ENCODE measurements at regions of chr14 and their contacts with region 1.

Region 1: DNA sequence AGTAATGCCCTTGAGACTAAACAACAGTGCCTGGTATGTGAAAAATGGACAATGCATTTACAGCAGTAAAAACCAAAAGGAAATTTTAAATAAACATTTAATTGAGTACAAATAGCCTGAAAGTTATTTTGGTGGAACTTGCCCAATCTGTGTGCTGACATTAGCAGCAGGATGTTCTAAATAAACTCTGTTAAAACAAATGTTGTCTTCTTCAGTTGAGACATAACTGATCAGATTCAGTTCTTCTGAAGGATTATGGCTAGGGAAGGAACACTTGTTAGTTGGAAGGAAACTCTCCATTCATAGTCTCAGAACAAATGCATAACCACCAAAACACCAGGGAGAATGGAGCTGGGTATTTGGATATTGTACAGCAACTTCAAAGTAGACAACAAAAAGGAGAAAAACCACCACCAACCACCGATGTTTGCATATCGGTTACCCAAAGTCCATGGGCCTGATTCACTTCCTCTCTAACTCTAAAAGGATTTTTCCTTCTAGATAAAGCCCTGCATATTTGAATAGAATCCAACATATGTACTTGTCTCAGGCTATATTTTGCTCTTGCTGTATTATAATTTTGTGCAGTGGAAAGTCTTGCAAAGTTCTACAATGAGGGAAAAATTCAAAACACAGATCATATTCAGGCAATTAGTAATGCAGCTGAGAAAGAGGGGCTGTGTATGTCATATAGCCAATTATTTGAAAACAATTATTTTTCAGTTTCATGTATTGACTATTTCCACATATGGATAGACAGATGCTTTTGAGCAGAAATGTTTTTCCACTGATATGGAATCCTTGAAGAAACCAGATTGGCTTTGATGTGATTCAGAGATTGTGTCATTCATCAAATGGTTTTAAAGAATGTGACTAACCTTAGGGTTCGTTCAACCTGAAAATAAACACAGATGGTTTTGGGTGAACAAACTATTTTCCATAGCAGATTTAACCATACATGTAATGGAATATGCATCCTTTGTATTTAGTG is 152.2 kb upstream of the BMP4 start:
- DNase-seq: peak; percentile 39
- H3K4me3 Mint-ChIP-seq: no peak overlapping the region
- H3K27ac Mint-ChIP-seq: peak overlapping the region; percentile 61
- H3K4me1 Mint-ChIP-seq: peaks cover 41% of the 10 kb centered on the region
- H3K27me3 Mint-ChIP-seq: no peaks in the 10 kb centered on the region
- CTCF ChIP-seq: no peak

Region 2: DNA sequence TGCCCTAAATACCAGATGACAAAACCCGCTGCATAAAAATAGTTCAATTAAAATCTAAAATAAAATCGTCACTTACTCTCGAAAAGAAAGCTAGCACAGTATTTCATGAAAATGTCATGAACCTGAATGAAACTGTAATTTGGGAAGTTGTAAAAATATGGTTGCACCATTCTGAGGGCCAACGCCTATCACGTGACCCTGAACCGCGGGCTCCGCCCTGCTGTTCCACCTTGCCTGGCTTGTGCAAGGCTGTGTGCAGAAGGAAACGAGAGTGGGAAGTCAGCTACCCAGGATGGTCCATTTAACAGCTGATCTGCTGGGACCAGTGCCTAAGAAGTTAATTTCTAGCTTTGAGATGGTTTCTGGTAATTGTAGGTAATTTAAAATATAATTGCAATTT is 60.5 kb before region 1 on chr14:
- CTCF ChIA-PET with region 1: no interaction called
- intact Hi-C with region 1: loop called (anchors 5 kb)
- DNase-seq: peak; percentile 6
- H3K4me3 Mint-ChIP-seq: peak overlapping the region; percentile 17
- H3K27ac Mint-ChIP-seq: peak overlapping the region; percentile 37
- H3K4me1 Mint-ChIP-seq: peaks cover 46% of the 10 kb centered on the region
- H3K27me3 Mint-ChIP-seq: no peaks in the 10 kb centered on the region
- CTCF ChIP-seq: no peak

Region 3: DNA sequence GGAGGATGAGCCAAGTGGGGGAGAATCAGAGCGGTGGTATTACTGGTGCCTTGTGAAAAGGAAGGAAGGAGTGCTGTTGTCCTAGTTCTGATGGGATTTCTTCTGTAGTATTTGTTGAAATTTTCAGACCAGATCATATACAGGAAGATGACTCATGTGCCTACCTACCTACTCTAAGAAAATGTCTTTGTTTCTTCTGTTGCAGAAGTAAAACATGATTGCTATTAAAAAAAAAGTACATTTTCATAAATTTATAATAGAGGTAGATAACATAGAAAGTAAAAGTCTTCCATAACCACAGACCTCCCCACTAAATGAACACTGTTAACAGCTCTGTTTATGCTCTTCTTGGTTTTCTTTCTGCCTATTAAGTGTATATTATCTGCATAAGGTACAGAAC is 485.1 kb after region 1 on chr14:
- CTCF ChIA-PET with region 1: no interaction called
- intact Hi-C with region 1: no loop called
- DNase-seq: no peak
- H3K4me3 Mint-ChIP-seq: no peak overlapping the region
- H3K27ac Mint-ChIP-seq: no peak overlapping the region
- H3K4me1 Mint-ChIP-seq: peaks cover 13% of the 10 kb centered on the region
- H3K27me3 Mint-ChIP-seq: no peaks in the 10 kb centered on the region
- CTCF ChIP-seq: no peak